ENCODE measurements at regions of chr19 and their contacts with region 1.

Region 1: DNA sequence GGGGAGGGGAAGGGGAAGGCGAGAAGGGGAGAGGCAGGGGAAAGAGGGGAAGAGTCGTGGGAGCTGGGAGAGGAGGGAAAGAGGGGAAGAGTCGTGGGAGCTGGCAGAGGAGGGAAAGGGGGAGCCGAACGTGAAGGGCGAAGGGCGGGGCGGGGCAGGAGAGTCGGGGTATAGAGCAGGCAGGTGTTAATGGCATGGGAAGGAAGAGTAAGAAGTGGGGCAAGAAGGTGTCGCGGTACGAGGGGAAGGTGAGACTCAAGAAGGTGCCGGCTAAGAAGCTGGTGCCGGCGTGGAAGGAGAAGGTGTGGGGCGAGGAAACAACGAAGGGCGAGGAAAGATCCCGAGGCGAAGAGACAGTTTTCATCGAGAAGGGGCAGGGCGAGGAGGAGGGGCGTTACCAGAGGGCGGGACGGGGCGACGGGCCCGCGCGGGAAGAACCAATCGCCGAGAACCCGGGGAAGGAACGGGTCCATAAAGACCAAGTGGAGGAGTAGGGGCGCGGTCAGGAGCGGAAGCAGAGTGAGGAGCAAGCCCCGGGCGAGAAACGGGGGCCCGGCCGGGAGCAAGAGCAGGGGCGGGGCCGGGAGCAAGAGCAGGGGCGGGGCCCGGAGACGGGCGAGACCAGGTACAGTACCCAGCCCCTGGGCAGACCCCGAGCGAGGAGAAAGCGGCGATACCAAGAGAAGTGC is 463 bp downstream of the CATSPERG start:
- DNase-seq: peak; percentile 95
- CTCF ChIP-seq: no peak

Region 2: GRCh38 chr19:37893845-37894575 is 442.1 kb before region 1 on chr19:
- in situ Hi-C with region 1: loop called (anchors 10 kb)
- DNase-seq: no peak
- CTCF ChIP-seq: no peak

Region 3: GRCh38 chr19:38134540-38135149 is 201.4 kb before region 1 on chr19:
- in situ Hi-C with region 1: no loop called
- DNase-seq: peak; percentile 62
- CTCF ChIP-seq: peak; percentile 11

Region 4: DNA sequence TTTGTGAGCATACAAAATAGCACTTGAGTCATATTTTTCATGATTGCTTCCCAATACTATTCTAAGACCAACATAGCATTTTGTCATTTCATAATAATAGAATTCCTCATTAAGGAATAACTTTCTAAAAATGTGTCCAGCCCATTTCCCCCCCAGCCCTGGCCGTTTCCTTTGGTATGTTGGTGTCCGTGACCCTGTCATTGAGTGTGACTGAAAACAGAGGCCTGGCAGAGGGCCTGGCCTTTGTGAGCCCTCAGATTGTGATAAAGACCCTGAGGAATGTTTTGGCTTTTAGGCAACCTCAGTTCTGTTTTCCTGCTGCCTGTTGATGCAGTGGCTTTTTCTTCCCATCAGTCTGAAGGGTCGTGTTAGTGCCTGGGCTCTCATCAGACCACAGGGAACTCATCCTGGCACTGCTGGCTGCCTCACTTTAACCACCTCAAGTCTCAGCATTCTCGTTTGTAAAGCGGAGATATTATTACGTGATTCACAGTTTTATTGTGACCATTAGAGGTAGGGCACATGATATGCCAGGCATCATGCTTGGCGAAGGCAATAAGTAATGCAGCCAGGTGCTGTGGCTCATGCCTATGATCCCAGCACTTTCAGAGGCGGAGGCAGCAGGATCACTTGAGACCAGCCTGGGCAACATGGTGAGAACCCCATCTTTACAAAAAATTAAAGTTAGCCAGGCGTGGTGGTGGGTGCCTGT is 58.0 kb before region 1 on chr19:
- in situ Hi-C with region 1: no loop called
- DNase-seq: no peak
- CTCF ChIP-seq: no peak